Thyroid gland (tissue), 4 donors: ENCODE measurements at regions of chr16 and their contacts with region 1.

Region 1: DNA sequence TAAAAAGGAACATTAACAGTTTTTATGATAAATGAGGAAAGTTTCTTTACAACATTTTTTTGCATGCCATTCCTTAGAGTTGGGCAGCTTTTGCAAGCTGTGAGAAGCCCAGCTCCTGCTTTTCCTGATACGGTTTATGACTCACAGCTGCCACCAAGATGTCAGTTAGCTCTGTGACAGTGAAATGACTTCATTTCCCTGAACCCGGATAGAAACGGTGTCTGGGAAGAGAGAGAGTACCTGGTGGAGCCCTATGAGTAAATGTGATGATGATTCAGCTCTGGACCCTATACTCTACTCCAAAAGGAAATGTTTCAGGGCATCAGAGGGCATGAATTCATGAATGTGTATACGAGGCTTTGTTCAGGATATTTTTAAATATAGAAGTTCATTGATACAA is 366.3 kb upstream of the HSBP1 start:
- DNase-seq: no peak
- H3K4me3 ChIP-seq: no peak overlapping the region
- H3K27ac ChIP-seq: no peak overlapping the region
- H3K4me1 ChIP-seq: no peaks in the 10 kb centered on the region
- H3K27me3 ChIP-seq: no peaks in the 10 kb centered on the region
- CTCF ChIP-seq: no peak
- POLR2A ChIP-seq: no peak

Region 2: DNA sequence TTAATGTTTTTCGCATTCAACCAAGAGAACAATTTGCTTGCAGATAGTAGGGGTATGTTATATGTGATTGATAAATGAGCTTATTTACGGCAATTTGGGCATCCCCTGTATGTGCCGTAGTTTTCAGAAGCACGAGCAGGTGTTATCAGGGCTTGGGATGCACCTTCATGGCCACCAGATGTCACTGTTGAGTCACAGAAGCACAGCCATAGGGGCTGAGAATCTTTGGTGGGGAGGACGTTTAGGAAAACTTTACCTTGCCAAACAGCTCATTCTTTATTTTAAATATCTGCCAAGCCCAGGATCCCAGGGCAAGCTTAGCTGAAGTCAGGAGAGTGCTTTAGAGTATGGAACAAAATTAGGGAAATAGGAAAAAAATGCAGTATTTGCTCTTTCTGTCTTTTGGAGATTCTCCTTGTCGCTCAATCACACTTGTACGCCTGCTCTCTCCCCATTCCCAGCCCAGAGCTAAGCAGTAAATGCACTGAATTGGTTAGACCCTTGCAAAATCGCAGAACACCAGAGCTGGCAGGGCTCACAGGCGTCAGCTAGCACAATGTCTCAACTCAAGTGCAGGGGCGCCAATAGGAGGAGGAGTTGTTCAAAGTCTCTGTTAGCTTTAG is 1177.9 kb before region 1 on chr16:
- intact Hi-C with region 1: loop called (anchors 10 kb)
- DNase-seq: peak; percentile 44 to 57
- H3K4me3 ChIP-seq: no peak overlapping the region
- H3K27ac ChIP-seq: no peak overlapping the region
- H3K4me1 ChIP-seq: peaks cover 0 to 5% of the 10 kb centered on the region in 2 donors
- H3K27me3 ChIP-seq: no peaks in the 10 kb centered on the region
- CTCF ChIP-seq: peak; percentile 45 to 89 (median 76)
- POLR2A ChIP-seq: no peak

Region 3: GRCh38 chr16:83344014-83344413 is 97.5 kb before region 1 on chr16:
- intact Hi-C with region 1: no loop called
- DNase-seq: no peak
- H3K4me3 ChIP-seq: no peak overlapping the region
- H3K27ac ChIP-seq: no peak overlapping the region
- H3K4me1 ChIP-seq: no peaks in the 10 kb centered on the region
- H3K27me3 ChIP-seq: no peaks in the 10 kb centered on the region
- CTCF ChIP-seq: no peak
- POLR2A ChIP-seq: no peak

Region 4: DNA sequence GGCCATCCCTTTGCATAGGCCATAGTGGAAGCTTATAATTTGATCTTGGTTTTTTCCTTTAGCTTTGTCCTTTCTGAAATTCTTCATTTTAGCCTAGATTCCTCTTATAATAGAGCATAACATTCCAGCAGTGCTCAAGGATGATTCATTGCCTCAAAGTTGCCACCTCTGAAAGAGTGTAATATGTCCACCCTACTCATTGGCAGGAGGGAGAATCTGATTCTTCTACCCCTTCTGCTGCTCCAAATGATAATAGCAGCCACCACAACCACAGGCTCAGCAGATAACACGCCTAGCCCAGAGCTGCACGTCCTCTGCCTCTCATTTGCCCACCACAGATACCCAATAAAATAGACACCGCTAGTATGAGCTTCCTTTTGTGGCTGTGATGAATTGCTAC is 28.9 kb after region 1 on chr16:
- intact Hi-C with region 1: no loop called
- DNase-seq: no peak
- H3K4me3 ChIP-seq: no peak overlapping the region
- H3K27ac ChIP-seq: no peak overlapping the region
- H3K4me1 ChIP-seq: peaks cover 13 to 32% of the 10 kb centered on the region in 2 donors
- H3K27me3 ChIP-seq: no peaks in the 10 kb centered on the region
- CTCF ChIP-seq: no peak
- POLR2A ChIP-seq: no peak